Adrenal gland (tissue), 19 donors: ENCODE measurements at regions of chr4 and their contacts with region 1.

Region 1: DNA sequence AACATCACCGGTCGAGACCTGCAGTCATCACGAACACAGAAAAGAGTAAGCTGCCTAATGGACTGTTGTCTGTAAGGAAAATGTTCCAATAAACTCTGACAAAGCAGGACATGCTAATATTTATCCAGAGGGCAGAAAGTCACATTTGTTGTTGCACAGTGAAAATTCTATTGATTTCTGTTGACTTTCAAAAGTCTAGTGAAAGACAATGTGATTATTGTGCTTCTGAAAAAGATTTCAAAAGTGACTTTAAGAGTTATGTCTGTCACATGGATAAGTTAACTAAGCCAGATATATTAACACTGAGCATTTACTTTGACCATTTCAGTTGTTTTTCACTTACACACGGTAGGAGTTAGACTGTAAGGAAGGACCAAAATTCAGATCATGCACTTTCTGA is 9.3 kb upstream of the RFC1 start:
- DNase-seq: no peak
- H3K4me3 ChIP-seq: no peak overlapping the region
- H3K27ac ChIP-seq: no peak overlapping the region
- H3K4me1 ChIP-seq: no peaks in the 10 kb centered on the region
- H3K27me3 ChIP-seq: no peaks in the 10 kb centered on the region
- CTCF ChIP-seq: no peak
- POLR2A ChIP-seq: no peak

Region 2: DNA sequence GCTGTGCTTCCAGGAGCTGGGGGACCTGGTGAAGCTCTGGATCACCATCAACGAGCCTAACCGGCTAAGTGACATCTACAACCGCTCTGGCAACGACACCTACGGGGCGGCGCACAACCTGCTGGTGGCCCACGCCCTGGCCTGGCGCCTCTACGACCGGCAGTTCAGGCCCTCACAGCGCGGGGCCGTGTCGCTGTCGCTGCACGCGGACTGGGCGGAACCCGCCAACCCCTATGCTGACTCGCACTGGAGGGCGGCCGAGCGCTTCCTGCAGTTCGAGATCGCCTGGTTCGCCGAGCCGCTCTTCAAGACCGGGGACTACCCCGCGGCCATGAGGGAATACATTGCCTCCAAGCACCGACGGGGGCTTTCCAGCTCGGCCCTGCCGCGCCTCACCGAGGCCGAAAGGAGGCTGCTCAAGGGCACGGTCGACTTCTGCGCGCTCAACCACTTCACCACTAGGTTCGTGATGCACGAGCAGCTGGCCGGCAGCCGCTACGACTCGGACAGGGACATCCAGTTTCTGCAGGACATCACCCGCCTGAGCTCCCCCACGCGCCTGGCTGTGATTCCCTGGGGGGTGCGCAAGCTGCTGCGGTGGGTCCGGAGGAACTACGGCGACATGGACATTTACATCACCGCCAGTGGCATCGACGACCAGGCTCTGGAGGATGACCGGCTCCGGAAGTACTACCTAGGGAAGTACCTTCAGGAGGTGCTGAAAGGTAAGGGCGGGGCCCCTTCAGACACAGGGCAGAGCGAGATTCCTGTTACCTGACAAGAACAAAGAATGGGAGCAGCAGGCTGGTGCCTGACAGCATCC is 71.5 kb after region 1 on chr4:
- intact Hi-C with region 1: loop called in 1 of 2 experiments (anchors 10 kb)
- DNase-seq: peak; percentile 45 to 84 (median 70)
- H3K4me3 ChIP-seq: peak overlapping the region in 2 of 4 donors; percentile 24 to 42
- H3K27ac ChIP-seq: no peak overlapping the region
- H3K4me1 ChIP-seq: peaks cover 5 to 10% of the 10 kb centered on the region in 2 donors
- H3K27me3 ChIP-seq: no peaks in the 10 kb centered on the region
- CTCF ChIP-seq: peak in 4 of 6 experiments; percentile 17 to 41 (median 35)
- POLR2A ChIP-seq: peak in 1 of 2 donors; percentile 23